ENCODE measurements at regions of chr13 and their contacts with region 1.

Region 1: GRCh38 chr13:29140277-29140676 is 320.1 kb downstream of the MTUS2 start:
- DNase-seq: no peak

Region 2: DNA sequence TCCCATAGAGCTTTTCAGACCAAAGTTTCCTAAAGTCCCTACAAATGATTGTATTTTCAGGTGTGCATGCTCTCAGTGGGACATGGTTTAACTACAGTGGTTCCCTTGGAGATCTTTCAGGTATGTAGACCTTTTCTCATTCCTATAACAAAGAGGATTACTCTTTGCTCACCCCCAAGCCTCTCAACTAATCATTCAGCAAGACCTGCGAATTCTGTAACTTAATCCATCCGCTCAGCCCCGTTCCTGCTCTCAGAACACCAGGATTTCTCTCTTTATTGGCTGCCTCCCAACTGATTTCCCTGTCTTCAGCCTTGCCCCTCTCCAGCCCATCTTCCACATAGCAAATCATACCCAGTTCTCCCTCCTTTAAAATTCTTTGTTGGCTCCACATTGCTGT is 66.5 kb before region 1 on chr13:
- intact Hi-C with region 1: loop called in 1 of 2 experiments (anchors 5 kb)
- DNase-seq: no peak